IMR-90 (cell line): ENCODE measurements at regions of chr7 and their contacts with region 1.

Region 1: GRCh38 chr7:81769891-81770727 is at the start of gene HGF:
- DNase-seq: peak; percentile 87
- ATAC-seq: peak; percentile 82
- H3K4me3 ChIP-seq: peak within 1 kb of the TSS; percentile 53
- H3K27ac ChIP-seq: peak within 1 kb of the TSS; percentile 95
- H3K4me1 ChIP-seq: peaks cover 6% of the 10 kb centered on the region
- H3K27me3 ChIP-seq: no peaks in the 10 kb centered on the region
- CTCF ChIP-seq: peak; percentile 48
- POLR2A ChIP-seq: no peak
- RAD21 ChIP-seq: peak; percentile 40
- total RNA-seq, gene HGF: 38.3 and 50.9 TPM in 2 replicates

Region 2: GRCh38 chr7:80859272-80859970 is 910.7 kb before region 1 on chr7:
- CTCF ChIA-PET with region 1: no interaction called
- POLR2A ChIA-PET with region 1: interaction called, 14 read pairs
- dilution Hi-C with region 1: no loop called
- in situ Hi-C with region 1: no loop called
- intact Hi-C with region 1: no loop called
- DNase-seq: peak; percentile 48
- ATAC-seq: peak; percentile 72
- H3K4me3 ChIP-seq: no peak overlapping the region
- H3K27ac ChIP-seq: no peak overlapping the region
- H3K4me1 ChIP-seq: peaks cover 8% of the 10 kb centered on the region
- H3K27me3 ChIP-seq: no peaks in the 10 kb centered on the region
- CTCF ChIP-seq: no peak
- POLR2A ChIP-seq: no peak
- RAD21 ChIP-seq: no peak

Region 3: GRCh38 chr7:81410471-81411125 is 359.5 kb before region 1 on chr7:
- CTCF ChIA-PET with region 1: no interaction called
- POLR2A ChIA-PET with region 1: no interaction called
- dilution Hi-C with region 1: no loop called
- in situ Hi-C with region 1: no loop called
- intact Hi-C with region 1: no loop called
- DNase-seq: no peak
- ATAC-seq: no peak
- H3K4me3 ChIP-seq: no peak overlapping the region
- H3K27ac ChIP-seq: no peak overlapping the region
- H3K4me1 ChIP-seq: no peaks in the 10 kb centered on the region; the same call in 1 of the 2 replicates
- H3K27me3 ChIP-seq: no peaks in the 10 kb centered on the region
- CTCF ChIP-seq: no peak
- POLR2A ChIP-seq: no peak
- RAD21 ChIP-seq: no peak

Region 4: DNA sequence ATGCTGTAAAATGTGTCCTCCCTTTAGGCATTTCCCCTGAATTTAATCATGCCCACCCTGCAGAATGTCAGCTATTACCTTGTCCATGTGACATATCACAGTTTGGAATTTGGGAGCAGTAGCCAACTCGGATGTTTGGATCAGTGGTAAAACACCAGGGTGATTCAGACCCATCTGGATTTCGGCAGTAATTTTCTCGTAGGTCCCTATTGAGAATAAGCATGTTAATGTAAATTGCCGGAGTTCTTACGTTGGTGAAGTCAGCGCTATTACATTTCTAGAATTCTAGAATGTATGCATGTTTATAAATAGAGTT is 44.3 kb before region 1 on chr7:
- CTCF ChIA-PET with region 1: no interaction called
- POLR2A ChIA-PET with region 1: interaction called, 7 read pairs
- dilution Hi-C with region 1: no loop called
- in situ Hi-C with region 1: no loop called
- intact Hi-C with region 1: loop called (anchors 5 kb)
- DNase-seq: peak; percentile 99
- ATAC-seq: peak; percentile 83
- H3K4me3 ChIP-seq: no peak overlapping the region
- H3K27ac ChIP-seq: peak overlapping the region; percentile 55; the same call in 1 of the 2 replicates
- H3K4me1 ChIP-seq: peaks cover 2% of the 10 kb centered on the region; the same call in 1 of the 2 replicates
- H3K27me3 ChIP-seq: no peaks in the 10 kb centered on the region
- CTCF ChIP-seq: no peak
- POLR2A ChIP-seq: no peak
- RAD21 ChIP-seq: no peak; the same call in 1 of the 2 replicates

Region 5: DNA sequence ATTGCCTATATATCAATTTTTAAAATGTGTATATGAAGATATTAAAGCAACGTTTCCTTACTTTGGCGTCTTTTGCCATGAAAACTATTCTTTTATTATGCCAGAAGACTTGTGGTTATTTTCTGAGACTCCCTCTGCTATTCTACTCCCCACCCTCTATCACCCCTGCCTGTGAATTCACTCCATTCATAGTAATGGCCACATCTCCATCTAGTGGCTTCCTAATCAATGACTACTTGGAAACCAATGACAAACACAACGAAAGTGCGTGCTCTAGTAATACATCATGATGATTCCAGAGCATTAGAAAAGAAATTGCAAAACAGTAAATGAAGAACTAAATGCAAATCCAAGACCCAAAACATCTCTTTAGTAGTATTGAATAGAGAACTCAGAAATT is 186.4 kb after region 1 on chr7:
- CTCF ChIA-PET with region 1: interaction called, 4 read pairs
- POLR2A ChIA-PET with region 1: interaction called, 3 read pairs
- dilution Hi-C with region 1: no loop called
- in situ Hi-C with region 1: no loop called
- intact Hi-C with region 1: loop called (anchors 2 kb)
- DNase-seq: peak; percentile 73
- ATAC-seq: peak; percentile 85
- H3K4me3 ChIP-seq: no peak overlapping the region
- H3K27ac ChIP-seq: no peak overlapping the region
- H3K4me1 ChIP-seq: no peaks in the 10 kb centered on the region
- H3K27me3 ChIP-seq: no peaks in the 10 kb centered on the region
- CTCF ChIP-seq: peak; percentile 71
- POLR2A ChIP-seq: no peak
- RAD21 ChIP-seq: peak; percentile 81

Region 6: GRCh38 chr7:82017334-82017943 is 247.3 kb after region 1 on chr7:
- CTCF ChIA-PET with region 1: interaction called, 7 read pairs
- POLR2A ChIA-PET with region 1: no interaction called
- dilution Hi-C with region 1: no loop called
- in situ Hi-C with region 1: no loop called
- intact Hi-C with region 1: loop called (anchors 2 kb)
- DNase-seq: peak; percentile 65
- ATAC-seq: peak; percentile 71
- H3K4me3 ChIP-seq: no peak overlapping the region
- H3K27ac ChIP-seq: no peak overlapping the region
- H3K4me1 ChIP-seq: peaks cover 4% of the 10 kb centered on the region
- H3K27me3 ChIP-seq: no peaks in the 10 kb centered on the region
- CTCF ChIP-seq: peak; percentile 75
- POLR2A ChIP-seq: no peak
- RAD21 ChIP-seq: peak; percentile 82